Left ventricle myocardium superior (tissue), 1 donor: ENCODE measurements at regions of chr6 and their contacts with region 1.

Region 1: GRCh38 chr6:131909408-131910218 is 41.6 kb downstream of the CCN2 start:
- DNase-seq: peak; percentile 33
- ATAC-seq: peak; percentile 73

Region 2: GRCh38 chr6:131694831-131695426 is 214.7 kb before region 1 on chr6:
- intact Hi-C with region 1: loop called (anchors 5 kb)
- DNase-seq: no peak
- ATAC-seq: peak; percentile 74

Region 3: GRCh38 chr6:132136981-132137380 is 227.4 kb after region 1 on chr6:
- intact Hi-C with region 1: no loop called
- DNase-seq: no peak
- ATAC-seq: no peak